ENCODE measurements at regions of chr5 and their contacts with region 1.

Region 1: GRCh38 chr5:152514827-152515397 is 109.8 kb upstream of the NMUR2 start:
- DNase-seq: peak; percentile 36
- H3K4me3 Mint-ChIP-seq: no peak overlapping the region
- H3K27ac Mint-ChIP-seq: no peak overlapping the region
- H3K4me1 Mint-ChIP-seq: no peaks in the 10 kb centered on the region
- H3K27me3 Mint-ChIP-seq: peaks cover 14% of the 10 kb centered on the region
- CTCF ChIP-seq: no peak

Region 2: DNA sequence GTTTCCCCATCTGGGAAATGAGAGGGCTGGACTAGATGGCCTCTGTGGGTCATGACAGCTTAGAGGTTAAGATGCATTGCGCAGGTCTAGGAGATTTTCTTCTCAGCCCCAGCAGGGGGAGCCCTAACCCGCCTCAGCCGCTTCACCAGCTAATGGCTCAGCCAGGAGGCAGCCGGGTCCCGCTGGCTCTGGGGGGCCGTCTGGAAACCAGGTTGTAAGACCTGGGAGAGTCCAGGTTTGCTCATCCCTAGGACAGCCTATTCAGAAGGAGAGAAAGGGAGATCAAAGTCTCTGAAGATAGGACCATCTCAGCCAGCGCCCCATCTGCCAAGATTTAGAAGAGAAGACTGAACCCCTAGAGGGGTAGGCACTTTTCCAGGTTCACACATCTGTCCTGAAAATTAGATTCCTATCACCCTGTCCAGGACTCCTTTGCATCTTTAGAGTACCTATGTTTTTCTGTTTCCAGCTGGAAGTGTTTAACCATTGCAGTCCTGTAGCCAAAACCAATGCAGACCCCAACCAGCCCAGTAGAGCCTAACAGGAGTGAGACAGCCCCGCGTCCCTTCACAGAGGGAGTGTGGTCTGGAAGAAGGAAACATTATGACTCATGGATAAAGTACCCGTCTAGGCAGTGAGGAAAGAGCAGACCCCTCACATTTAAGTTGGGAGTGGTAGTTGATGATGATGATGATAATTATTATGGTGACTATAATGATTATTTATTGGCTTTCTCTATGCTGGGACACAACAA is 855.7 kb before region 1 on chr5:
- CTCF ChIA-PET with region 1: interaction called, 5 read pairs
- intact Hi-C with region 1: loop called (anchors 2 kb)
- DNase-seq: peak; percentile 93
- H3K4me3 Mint-ChIP-seq: no peak overlapping the region
- H3K27ac Mint-ChIP-seq: no peak overlapping the region
- H3K4me1 Mint-ChIP-seq: peaks cover 17% of the 10 kb centered on the region
- H3K27me3 Mint-ChIP-seq: peaks cover 22% of the 10 kb centered on the region
- CTCF ChIP-seq: peak; percentile 90

Region 3: GRCh38 chr5:151825445-151825844 is 689.5 kb before region 1 on chr5:
- CTCF ChIA-PET with region 1: interaction called, 16 read pairs
- intact Hi-C with region 1: loop called (anchors 1 kb)
- DNase-seq: peak; percentile 70
- H3K4me3 Mint-ChIP-seq: no peak overlapping the region
- H3K27ac Mint-ChIP-seq: peak overlapping the region; percentile 19
- H3K4me1 Mint-ChIP-seq: peaks cover 11% of the 10 kb centered on the region
- H3K27me3 Mint-ChIP-seq: no peaks in the 10 kb centered on the region
- CTCF ChIP-seq: peak; percentile 90

Region 4: DNA sequence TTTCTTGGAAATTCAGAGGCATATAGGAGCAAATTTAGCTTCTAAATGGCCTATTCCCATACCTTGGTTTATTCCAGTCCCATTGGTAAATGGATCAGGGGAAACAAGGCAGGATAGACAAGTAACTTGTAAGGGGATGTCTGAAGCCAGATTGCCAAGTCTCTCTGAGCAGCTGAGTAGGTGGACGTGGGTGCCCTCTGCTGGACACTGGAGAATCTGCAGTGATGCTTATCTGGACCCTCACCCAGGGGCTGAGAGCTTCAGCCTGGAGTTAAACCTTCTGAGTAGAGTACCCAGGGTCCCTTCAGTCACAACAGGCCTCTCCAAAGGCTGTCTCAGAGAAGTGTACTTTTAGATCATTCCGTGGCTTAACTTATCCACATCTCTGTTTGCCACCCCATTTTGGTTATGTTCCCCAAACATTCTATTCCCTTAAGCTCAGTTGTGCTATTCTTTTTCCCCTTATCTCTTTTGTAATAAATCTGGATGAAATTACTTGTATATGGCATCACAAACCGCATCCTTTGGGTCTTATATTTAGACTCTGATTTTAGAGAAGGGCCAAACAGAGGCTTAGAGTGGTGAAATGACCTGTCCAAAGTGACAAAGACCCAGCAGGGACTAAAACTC is 372.0 kb before region 1 on chr5:
- CTCF ChIA-PET with region 1: interaction called, 4 read pairs
- intact Hi-C with region 1: loop called (anchors 2 kb)
- DNase-seq: peak; percentile 76
- H3K4me3 Mint-ChIP-seq: no peak overlapping the region
- H3K27ac Mint-ChIP-seq: no peak overlapping the region
- H3K4me1 Mint-ChIP-seq: no peaks in the 10 kb centered on the region
- H3K27me3 Mint-ChIP-seq: peaks cover 24% of the 10 kb centered on the region
- CTCF ChIP-seq: peak; percentile 87

Region 5: GRCh38 chr5:152560512-152561137 is 45.7 kb after region 1 on chr5:
- CTCF ChIA-PET with region 1: no interaction called
- intact Hi-C with region 1: no loop called
- DNase-seq: peak; percentile 75
- H3K4me3 Mint-ChIP-seq: no peak overlapping the region
- H3K27ac Mint-ChIP-seq: no peak overlapping the region
- H3K4me1 Mint-ChIP-seq: no peaks in the 10 kb centered on the region
- H3K27me3 Mint-ChIP-seq: peaks cover 21% of the 10 kb centered on the region
- CTCF ChIP-seq: peak; percentile 85